ENCODE measurements at regions of chr19 and their contacts with region 1.

Region 1: DNA sequence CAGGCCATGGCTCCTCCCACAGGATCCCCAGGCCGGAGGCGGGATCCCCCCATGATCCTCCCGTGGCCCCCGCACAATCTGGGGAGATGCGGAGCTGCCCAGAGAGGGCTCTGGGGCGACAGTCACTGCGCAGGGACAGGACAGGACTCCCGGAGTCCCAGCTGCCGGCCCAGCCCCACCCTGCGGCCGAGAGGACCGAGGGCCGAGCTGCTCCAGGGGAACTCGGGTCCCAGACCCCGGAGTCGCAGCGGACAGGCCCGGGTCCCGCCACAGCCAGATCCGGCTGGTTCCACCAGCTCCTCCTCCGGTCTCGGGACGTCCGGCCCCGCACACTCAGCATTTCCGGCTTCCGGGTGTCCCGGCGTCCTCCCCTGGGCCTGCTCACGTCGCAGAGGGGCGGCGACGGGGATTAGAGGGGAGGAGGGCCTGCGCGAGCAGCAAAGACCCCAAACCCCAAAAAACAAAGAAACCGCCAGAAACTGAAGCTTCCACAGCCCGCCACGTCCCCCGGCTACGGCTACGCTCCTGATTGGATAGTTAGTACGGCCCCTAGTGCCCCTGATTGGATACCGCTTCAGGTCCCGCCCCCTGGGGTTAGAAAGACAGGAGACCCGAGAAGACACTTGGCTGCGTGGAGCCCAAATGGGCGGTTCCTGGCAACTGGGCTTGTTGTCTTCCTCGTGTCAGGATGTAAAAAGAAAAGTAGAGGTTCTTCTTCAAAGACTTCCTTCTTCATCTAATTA is 21.3 kb upstream of the OR10H1 start:
- DNase-seq: peak; percentile 94
- H3K4me3 ChIP-seq: peak overlapping the region; percentile 64
- H3K27ac ChIP-seq: peak overlapping the region; percentile 99
- H3K4me1 ChIP-seq: peaks cover 53% of the 10 kb centered on the region
- H3K27me3 ChIP-seq: no peaks in the 10 kb centered on the region
- CTCF ChIP-seq: peak; percentile 10; the same call in 1 of the 2 replicates

Region 2: DNA sequence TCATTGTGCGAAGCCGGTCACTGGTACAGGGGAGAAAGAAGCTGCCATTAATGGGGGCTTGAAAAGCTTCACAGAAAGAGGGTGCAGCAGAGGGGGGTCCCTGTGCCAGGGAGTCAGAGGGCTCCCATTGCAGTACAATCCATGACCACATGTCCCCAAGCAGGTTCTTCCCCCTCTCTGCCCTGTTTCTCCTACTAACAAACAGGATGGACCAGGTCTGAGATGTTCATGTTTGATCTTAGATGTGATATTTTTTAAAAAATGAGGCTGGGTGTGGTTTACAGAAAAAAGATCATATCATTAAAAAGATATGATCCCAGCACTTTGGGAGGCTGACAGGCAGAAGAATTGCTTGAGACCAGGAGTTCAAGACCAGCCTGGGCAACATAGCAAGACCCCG is 886.4 kb before region 1 on chr19:
- CTCF ChIA-PET with region 1: no interaction called
- POLR2A ChIA-PET with region 1: interaction called, 19 read pairs
- intact Hi-C with region 1: no loop called
- DNase-seq: peak in 1 of 2 experiments; percentile 43
- H3K4me3 ChIP-seq: no peak overlapping the region
- H3K27ac ChIP-seq: no peak overlapping the region
- H3K4me1 ChIP-seq: peaks cover 11% of the 10 kb centered on the region
- H3K27me3 ChIP-seq: no peaks in the 10 kb centered on the region
- CTCF ChIP-seq: no peak

Region 3: DNA sequence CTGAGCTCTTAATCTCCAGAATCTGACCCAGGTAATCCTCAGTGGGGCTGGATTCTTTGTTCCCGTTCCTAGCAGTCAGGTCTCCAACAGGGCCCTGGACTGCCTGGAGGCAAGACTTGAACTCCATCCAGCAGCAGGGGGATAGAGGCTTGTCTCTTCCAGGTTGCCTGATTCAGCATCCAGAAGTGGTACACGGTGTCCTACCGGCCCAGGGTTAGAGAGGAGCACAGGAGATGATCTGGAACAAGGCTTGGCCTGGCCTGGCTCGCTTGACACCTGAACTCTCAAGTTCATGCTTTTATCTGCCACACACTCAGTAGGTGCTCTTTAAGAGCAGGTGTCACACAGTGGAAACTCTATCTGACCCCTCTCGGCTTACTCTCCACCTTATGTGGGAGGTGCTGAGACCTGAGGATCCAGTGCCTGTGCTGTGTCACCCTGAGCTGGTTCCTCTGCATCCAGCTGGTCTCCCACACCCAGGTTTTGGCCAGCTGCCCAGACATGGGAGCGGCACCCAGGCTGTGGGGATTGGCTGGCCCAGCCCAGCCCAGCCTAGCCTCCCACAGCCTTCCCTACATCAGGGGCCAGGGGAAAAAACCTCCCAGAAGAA is 196.4 kb before region 1 on chr19 and contains the start of gene CYP4F3:
- CTCF ChIA-PET with region 1: interaction called, 3 read pairs
- POLR2A ChIA-PET with region 1: interaction called, 3 read pairs
- intact Hi-C with region 1: loop called (anchors 2 kb)
- DNase-seq: peak; percentile 98
- H3K4me3 ChIP-seq: peak within 1 kb of the TSS; percentile 32; the same call in 1 of the 2 replicates
- H3K27ac ChIP-seq: peak within 1 kb of the TSS; percentile 95
- H3K4me1 ChIP-seq: peaks cover 48% of the 10 kb centered on the region
- H3K27me3 ChIP-seq: no peaks in the 10 kb centered on the region
- CTCF ChIP-seq: no peak
- total RNA-seq, gene CYP4F3: 57.6 and 70.7 TPM in 2 replicates

Region 4: DNA sequence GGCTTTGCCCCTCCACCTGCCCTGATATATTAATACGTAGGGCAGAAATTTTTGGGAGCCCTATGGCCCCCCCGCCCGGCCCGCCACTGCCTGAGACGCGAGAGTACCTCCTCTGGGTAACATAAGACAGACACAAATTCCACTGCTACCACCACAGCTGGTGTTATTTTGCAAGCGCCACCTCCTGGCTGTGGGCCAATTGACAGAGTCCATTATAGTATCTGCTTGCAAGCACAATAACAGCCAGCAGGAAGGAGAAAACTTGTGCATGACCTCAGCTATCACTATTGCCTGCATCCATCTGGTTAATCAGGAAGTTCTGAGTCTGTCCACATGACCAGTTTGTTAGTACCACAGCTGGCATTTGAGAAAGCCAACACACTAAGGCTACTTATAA is 134.2 kb before region 1 on chr19:
- CTCF ChIA-PET with region 1: no interaction called
- POLR2A ChIA-PET with region 1: no interaction called
- intact Hi-C with region 1: loop called (anchors 1 kb)
- DNase-seq: peak; percentile 85 to 97
- H3K4me3 ChIP-seq: no peak overlapping the region
- H3K27ac ChIP-seq: no peak overlapping the region; the same call in 1 of the 2 replicates
- H3K4me1 ChIP-seq: peaks cover 19% of the 10 kb centered on the region
- H3K27me3 ChIP-seq: peaks cover 7% of the 10 kb centered on the region; the same call in 1 of the 2 replicates
- CTCF ChIP-seq: 0 out of 2 replicates have a peak, but pooled peaks have one; percentile 28

Region 5: GRCh38 chr19:15779756-15780476 is 56.9 kb before region 1 on chr19:
- CTCF ChIA-PET with region 1: no interaction called
- POLR2A ChIA-PET with region 1: no interaction called
- intact Hi-C with region 1: no loop called
- DNase-seq: peak; percentile 28 to 42
- H3K4me3 ChIP-seq: no peak overlapping the region
- H3K27ac ChIP-seq: no peak overlapping the region
- H3K4me1 ChIP-seq: peaks cover 11% of the 10 kb centered on the region; the same call in 1 of the 2 replicates
- H3K27me3 ChIP-seq: peaks cover 29% of the 10 kb centered on the region
- CTCF ChIP-seq: no peak

Region 6: DNA sequence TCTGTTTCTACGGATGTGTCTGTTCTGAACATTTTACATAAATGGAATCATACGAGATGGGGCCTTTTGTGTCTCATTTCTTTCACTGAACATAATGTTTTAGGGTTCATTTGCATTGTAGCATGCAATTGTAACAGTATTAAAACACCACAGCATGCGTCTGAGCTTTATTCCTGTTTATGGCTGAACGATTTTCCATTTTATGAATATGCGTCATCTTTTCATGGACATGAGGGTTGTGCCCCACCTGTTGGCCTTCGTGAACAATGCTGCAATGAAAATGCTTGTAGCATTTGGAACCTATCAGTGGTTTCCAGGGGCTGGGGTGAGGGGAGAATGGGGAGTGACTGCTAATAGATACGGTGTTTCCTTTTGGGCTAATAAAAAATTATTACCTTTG is 26.4 kb before region 1 on chr19:
- CTCF ChIA-PET with region 1: interaction called, 3 read pairs
- POLR2A ChIA-PET with region 1: no interaction called
- intact Hi-C with region 1: loop called (anchors 2 kb)
- DNase-seq: peak; percentile 37 to 63
- H3K4me3 ChIP-seq: no peak overlapping the region
- H3K27ac ChIP-seq: no peak overlapping the region
- H3K4me1 ChIP-seq: peaks cover 6% of the 10 kb centered on the region; the same call in 1 of the 2 replicates
- H3K27me3 ChIP-seq: no peaks in the 10 kb centered on the region
- CTCF ChIP-seq: peak; percentile 63

Region 7: DNA sequence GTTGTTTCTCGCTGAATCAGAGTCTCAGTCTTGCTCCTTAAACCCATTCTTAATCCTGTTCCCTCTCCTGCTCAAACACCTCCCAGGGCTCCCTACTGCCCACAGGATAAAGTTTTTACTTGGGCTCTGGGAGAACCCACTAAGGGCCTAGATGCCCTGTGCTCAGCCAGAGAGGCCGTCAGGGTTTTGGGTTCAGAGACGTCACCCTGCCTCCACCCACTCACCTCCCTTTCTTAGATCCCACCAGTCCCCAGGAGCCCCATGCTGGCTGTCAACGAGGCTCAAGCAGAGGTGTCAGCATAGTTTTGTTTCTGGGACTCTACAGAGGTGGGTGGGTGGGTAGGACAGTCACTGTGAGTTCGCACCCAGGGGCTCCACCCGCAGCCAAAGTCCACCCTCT is 76.6 kb after region 1 on chr19:
- CTCF ChIA-PET with region 1: no interaction called
- POLR2A ChIA-PET with region 1: no interaction called
- intact Hi-C with region 1: no loop called
- DNase-seq: no peak
- H3K4me3 ChIP-seq: no peak overlapping the region
- H3K27ac ChIP-seq: no peak overlapping the region
- H3K4me1 ChIP-seq: no peaks in the 10 kb centered on the region
- H3K27me3 ChIP-seq: no peaks in the 10 kb centered on the region
- CTCF ChIP-seq: no peak

Region 8: DNA sequence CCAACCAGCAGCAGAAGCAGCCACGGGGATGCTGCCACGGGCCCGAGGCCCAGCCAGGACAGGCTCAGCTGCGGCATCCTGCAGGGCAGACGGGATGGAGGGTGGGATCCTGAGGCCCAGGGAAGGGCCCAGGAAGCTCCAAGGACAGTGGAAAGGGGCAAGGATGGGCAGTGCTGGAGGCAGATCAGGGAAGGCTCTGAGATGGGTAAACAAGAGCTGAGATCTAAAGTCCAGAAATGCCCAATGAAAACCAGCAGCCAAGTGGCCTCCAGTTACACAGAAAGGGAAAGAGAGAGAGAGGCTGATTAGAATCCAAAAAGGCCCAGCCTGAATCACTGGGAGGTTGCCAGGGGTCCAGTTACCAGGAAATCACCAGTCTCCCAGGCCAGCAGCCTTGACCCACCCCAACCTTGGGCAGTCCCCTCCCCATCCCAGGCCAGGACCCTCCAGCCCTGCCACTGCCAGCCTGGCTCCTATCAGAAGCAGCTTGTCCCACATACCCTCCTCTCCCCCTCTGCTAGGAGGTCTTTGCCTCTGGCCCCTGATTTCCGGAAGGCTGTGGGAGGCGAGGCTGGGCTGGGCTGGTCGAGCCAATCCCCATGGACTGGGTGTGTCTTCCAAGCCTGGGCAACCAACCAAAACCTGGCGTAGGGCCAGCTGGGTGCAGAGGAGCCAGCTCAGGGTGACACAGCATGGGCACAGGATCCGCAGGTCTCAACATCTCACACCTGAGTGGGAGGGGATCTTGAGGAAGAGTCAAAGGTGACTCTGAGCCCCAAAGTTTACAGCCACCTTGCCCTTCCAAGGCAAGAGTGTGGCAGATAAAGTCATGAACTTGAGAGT is 97.8 kb after region 1 on chr19 and contains the start of gene CYP4F11:
- CTCF ChIA-PET with region 1: no interaction called
- POLR2A ChIA-PET with region 1: interaction called, 4 read pairs
- intact Hi-C with region 1: loop called (anchors 10 kb)
- DNase-seq: peak; percentile 96 to 98
- H3K4me3 ChIP-seq: peak within 1 kb of the TSS; percentile 83
- H3K27ac ChIP-seq: peak within 1 kb of the TSS; percentile 96
- H3K4me1 ChIP-seq: peaks cover 14% of the 10 kb centered on the region
- H3K27me3 ChIP-seq: no peaks in the 10 kb centered on the region
- CTCF ChIP-seq: no peak
- total RNA-seq, gene CYP4F11: 152 and 187 TPM in 2 replicates

Region 9: GRCh38 chr19:16125737-16126495 is 289.1 kb after region 1 on chr19:
- CTCF ChIA-PET with region 1: no interaction called
- POLR2A ChIA-PET with region 1: no interaction called
- intact Hi-C with region 1: no loop called
- DNase-seq: no peak
- H3K4me3 ChIP-seq: no peak overlapping the region
- H3K27ac ChIP-seq: no peak overlapping the region
- H3K4me1 ChIP-seq: no peaks in the 10 kb centered on the region
- H3K27me3 ChIP-seq: no peaks in the 10 kb centered on the region
- CTCF ChIP-seq: no peak

Region 10: DNA sequence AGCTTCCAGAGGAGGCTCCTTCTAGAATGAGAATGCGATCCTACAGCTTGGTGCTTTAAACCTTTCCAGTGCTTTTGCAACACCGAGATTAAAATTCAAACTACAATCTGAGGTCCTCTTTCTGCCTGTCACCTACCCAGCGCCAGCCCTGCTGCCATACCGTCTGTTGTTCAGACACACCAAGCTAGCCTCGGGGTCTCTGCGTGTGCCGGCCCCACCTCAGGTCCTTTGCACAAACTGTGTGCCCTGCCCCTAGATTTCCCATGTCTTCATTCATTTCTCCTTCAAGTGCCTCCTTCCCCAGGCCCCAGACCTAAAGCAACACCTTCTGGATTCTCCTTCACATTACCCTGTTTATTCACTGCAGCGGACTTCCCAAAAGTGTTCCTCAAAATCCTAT is 317.8 kb after region 1 on chr19:
- CTCF ChIA-PET with region 1: no interaction called
- POLR2A ChIA-PET with region 1: no interaction called
- intact Hi-C with region 1: no loop called
- DNase-seq: no peak
- H3K4me3 ChIP-seq: no peak overlapping the region
- H3K27ac ChIP-seq: no peak overlapping the region
- H3K4me1 ChIP-seq: no peaks in the 10 kb centered on the region
- H3K27me3 ChIP-seq: no peaks in the 10 kb centered on the region
- CTCF ChIP-seq: no peak

Measured in PC-9 (cell line).